AG04449 (cell line): ENCODE measurements at regions of chr1 and their contacts with region 1.

Region 1: DNA sequence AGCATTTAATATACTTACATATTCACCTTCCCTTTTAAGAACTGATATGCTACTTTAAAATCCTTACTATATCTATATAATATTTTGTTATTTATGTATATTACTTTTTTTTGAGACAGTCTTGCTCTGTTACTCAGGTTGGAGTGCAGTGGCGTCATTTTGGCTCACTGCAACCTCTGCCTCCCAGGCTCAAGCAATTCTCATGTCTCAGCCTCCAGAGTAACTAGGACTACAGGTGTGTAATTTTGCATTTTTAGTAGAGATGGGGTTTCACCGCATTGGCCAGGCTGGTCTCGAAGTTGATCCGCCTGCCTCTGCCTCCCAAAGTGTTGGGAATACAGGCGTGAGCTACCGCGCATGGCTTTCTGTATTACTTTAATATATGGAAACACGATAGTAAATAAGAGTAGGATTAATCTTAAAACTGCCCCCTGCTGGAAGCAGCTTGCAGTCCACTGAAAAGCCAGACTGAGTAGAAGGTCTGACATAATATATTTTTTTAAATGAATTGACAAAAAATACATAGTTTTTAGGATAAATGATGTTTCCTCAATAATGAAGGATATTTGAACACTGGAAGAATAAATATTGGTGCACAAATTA is 24.4 kb downstream of the RCAN3 start:
- DNase-seq: no peak
- H3K4me3 ChIP-seq: no peak overlapping the region
- CTCF ChIP-seq: peak; percentile 13

Region 2: DNA sequence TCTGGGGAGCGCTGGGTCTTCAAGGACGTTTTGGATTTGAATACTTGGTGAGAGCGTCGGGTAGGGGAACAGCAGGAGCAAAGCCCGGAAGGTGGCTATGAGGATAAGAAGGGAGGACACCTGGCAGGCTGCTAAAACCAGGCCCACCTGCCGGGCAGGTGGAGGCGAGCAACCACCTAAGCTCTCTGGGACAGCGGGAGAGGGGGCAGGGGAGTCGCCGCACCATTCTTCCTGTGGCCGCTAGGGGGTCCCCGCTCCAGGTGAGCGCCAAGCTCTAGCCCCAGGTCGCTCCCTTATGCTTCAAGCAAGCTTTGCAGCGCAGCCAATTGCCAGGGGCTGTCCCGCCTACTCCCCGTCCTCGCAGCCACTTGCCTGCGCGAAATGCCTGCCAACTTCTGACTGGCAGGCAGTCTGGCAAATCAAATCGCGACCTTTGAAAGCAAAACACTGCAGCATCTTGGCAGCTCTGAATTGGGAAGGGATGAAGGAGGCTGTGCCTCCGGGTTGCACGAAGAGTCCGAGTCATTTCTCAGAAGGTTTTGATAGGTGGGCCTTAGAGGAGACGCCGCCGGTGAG is 111.6 kb before region 1 on chr1 and contains the start of gene NIPAL3:
- CTCF ChIA-PET with region 1: interaction called, 15 read pairs
- POLR2A ChIA-PET with region 1: no interaction called
- DNase-seq: peak; percentile 96
- H3K4me3 ChIP-seq: peak within 1 kb of the TSS; percentile 87
- CTCF ChIP-seq: peak; percentile 91

Region 3: GRCh38 chr1:24502709-24503058 is 24.4 kb before region 1 on chr1 and contains the start of gene RCAN3:
- CTCF ChIA-PET with region 1: interaction called, 31 read pairs
- POLR2A ChIA-PET with region 1: no interaction called
- DNase-seq: no peak
- H3K4me3 ChIP-seq: peak within 1 kb of the TSS; percentile 71
- CTCF ChIP-seq: no peak

Region 4: GRCh38 chr1:24514946-24515345 is 12.1 kb before region 1 on chr1:
- CTCF ChIA-PET with region 1: interaction called, 17 read pairs
- POLR2A ChIA-PET with region 1: no interaction called
- DNase-seq: no peak
- H3K4me3 ChIP-seq: no peak overlapping the region
- CTCF ChIP-seq: no peak

Region 5: DNA sequence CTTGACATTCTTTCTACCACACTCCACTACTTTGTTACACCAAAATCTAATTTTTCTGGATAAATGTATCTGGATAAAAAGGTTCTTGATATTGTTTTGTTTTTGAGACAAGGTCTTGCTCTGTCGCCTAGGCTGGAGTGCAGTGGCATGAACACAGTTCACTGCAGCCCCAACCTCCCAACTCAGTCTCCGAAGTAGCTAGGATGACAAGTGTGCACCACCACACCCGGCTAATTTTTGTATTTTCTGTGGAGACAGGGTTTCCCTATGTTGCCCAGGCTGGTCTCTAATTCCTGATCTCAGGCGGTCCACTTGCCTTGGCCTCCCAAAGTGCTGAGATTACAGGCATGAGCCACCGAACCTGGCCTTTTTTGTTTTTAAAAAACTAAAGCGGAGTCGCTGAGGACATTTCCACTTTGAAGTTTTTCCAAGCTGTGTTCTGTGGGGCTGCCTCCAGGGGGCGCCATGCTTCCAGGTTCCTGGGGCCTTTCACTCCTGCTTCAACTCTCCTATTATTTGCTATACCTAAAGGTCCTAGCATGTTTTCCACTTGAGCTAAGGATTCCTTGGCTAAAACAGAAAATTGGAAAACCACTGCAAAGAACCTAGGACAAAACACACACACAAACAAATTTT is 14.8 kb after region 1 on chr1:
- CTCF ChIA-PET with region 1: interaction called, 22 read pairs
- POLR2A ChIA-PET with region 1: no interaction called
- DNase-seq: no peak
- H3K4me3 ChIP-seq: no peak overlapping the region
- CTCF ChIP-seq: peak; percentile 28

Region 6: DNA sequence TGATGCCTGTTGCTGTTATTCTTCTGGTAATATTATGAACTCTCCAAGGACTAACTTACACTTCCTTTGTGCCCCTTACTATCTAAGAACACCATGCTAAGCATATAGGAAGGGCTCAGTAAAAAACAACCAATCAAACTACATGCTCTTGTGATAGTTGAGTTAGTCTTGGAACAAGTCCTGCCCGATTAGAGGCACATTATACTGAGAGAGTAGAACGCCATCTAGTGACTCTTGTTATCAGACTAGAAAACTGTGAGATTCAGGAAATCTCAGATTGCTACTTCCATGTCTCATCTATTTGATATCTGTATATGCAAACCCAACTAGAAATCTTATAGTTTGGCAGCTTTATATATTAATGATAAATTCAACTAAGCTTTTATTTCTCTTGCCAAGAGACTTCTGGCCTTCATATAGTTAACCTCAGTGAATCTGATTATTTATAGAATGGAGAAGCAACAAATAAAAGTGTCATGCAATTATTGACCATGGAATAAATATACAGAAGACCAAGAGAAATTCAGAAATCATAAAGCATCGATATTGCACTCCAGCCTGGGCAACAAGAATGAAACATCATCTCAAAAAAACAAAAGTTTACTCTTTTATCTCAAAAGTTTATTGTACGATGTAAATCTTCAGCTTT is 108.3 kb after region 1 on chr1:
- CTCF ChIA-PET with region 1: interaction called, 13 read pairs
- POLR2A ChIA-PET with region 1: no interaction called
- DNase-seq: peak; percentile 56
- H3K4me3 ChIP-seq: no peak overlapping the region
- CTCF ChIP-seq: peak; percentile 56